Activated B cell treated with CpG ODN at 0.5 μM for 24 hours (primary cell): ENCODE measurements at regions of chr14 and their contacts with region 1.

Region 1: GRCh38 chr14:92737206-92737605 is 11.2 kb downstream of the LGMN start:
- DNase-seq: no peak
- ATAC-seq: no peak
- H3K4me3 Mint-ChIP-seq: no peak overlapping the region
- H3K27ac Mint-ChIP-seq: peak overlapping the region; percentile 46
- H3K4me1 Mint-ChIP-seq: peaks cover 20% of the 10 kb centered on the region
- H3K27me3 Mint-ChIP-seq: no peaks in the 10 kb centered on the region
- CTCF ChIP-seq: no peak

Region 2: DNA sequence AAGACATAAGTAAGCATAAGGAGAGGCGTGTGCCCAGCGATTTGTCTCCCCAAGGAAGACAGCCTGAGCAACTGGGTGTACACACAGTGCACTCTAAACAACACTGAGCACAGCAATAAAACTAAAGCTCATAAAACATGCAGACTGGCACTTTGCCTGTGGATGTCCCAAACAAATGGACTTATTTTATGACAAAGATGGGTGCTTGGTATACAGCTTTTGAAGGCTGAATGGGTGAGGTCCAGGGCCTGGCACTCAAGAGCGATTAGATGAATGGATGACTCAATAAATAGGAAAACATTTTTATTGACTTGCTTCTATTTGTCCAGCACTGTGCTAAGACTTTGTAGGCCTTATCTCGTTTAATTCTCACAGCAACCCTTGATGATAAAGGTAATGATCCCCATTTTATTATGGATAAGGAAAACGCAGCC is 17.3 kb before region 1 on chr14:
- CTCF ChIA-PET with region 1: no interaction called
- POLR2A ChIA-PET with region 1: interaction called, 13 read pairs
- intact Hi-C with region 1: no loop called
- DNase-seq: no peak
- ATAC-seq: no peak
- H3K4me3 Mint-ChIP-seq: no peak overlapping the region
- H3K27ac Mint-ChIP-seq: no peak overlapping the region
- H3K4me1 Mint-ChIP-seq: no peaks in the 10 kb centered on the region
- H3K27me3 Mint-ChIP-seq: no peaks in the 10 kb centered on the region
- CTCF ChIP-seq: no peak

Region 3: GRCh38 chr14:92877757-92878431 is 140.7 kb after region 1 on chr14:
- CTCF ChIA-PET with region 1: no interaction called
- POLR2A ChIA-PET with region 1: no interaction called
- intact Hi-C with region 1: no loop called
- DNase-seq: no peak
- ATAC-seq: no peak
- H3K4me3 Mint-ChIP-seq: no peak overlapping the region
- H3K27ac Mint-ChIP-seq: no peak overlapping the region
- H3K4me1 Mint-ChIP-seq: no peaks in the 10 kb centered on the region
- H3K27me3 Mint-ChIP-seq: peaks cover 35% of the 10 kb centered on the region
- CTCF ChIP-seq: no peak

Region 4: DNA sequence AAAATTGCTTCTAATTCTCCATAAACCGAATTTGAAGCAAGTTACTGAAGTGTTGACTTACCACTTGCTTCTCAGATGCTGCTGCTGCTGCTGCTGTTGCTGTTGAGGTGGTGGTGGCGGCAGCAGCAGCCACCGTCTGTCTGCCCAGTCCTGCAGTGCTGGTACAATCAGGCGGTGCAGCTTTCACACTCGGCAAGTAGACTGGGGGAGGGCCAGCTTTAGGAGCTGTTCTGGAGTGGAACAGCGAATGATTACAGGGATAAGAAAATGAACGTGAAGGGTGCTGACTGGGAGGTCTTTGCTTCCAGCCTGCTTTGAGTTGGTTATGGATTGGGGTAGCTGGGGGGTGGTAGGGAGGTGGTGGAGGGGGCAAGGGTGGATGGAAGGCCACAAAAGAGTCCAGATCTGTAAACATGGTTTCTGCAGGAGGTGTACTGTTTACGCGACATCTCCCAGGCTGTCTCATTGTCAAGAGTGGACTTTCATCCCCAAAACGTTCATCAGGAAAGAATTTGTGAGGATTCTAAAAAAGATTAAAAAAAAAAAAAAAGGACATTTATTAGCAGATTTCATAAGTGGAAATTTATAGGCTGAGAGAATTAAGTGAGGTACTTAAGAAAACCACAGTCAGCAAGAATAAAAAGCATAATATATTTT is 508.7 kb after region 1 on chr14:
- CTCF ChIA-PET with region 1: no interaction called
- POLR2A ChIA-PET with region 1: no interaction called
- intact Hi-C with region 1: no loop called
- DNase-seq: no peak
- ATAC-seq: no peak
- H3K4me3 Mint-ChIP-seq: no peak overlapping the region
- H3K27ac Mint-ChIP-seq: no peak overlapping the region
- H3K4me1 Mint-ChIP-seq: peaks cover 5% of the 10 kb centered on the region
- H3K27me3 Mint-ChIP-seq: no peaks in the 10 kb centered on the region
- CTCF ChIP-seq: no peak